Caco-2 (cell line): ENCODE measurements at regions of chr19 and their contacts with region 1.

Region 1: GRCh38 chr19:44653977-44654774 is 10.5 kb downstream of the PVR start:
- DNase-seq: peak in 1 of 2 experiments; percentile 54
- H3K4me3 ChIP-seq: no peak overlapping the region
- H3K4me3 Mint-ChIP-seq: no peak overlapping the region
- H3K27ac Mint-ChIP-seq: peak overlapping the region; percentile 31
- H3K4me1 ChIP-seq: no peaks in the 10 kb centered on the region
- H3K4me1 Mint-ChIP-seq: peaks cover 29% of the 10 kb centered on the region
- H3K27me3 ChIP-seq: no peaks in the 10 kb centered on the region
- H3K27me3 Mint-ChIP-seq: no peaks in the 10 kb centered on the region
- CTCF ChIP-seq: peak; percentile 20 to 58

Region 2: GRCh38 chr19:44512326-44513298 is 141.6 kb before region 1 on chr19:
- CTCF ChIA-PET with region 1: no interaction called
- POLR2A ChIA-PET with region 1: no interaction called
- intact Hi-C with region 1: loop called (anchors 5 kb)
- DNase-seq: peak; percentile 63 to 75
- H3K4me3 ChIP-seq: no peak overlapping the region
- H3K4me3 Mint-ChIP-seq: no peak overlapping the region
- H3K27ac Mint-ChIP-seq: no peak overlapping the region
- H3K4me1 ChIP-seq: no peaks in the 10 kb centered on the region
- H3K4me1 Mint-ChIP-seq: no peaks in the 10 kb centered on the region
- H3K27me3 ChIP-seq: no peaks in the 10 kb centered on the region
- H3K27me3 Mint-ChIP-seq: peaks cover 19% of the 10 kb centered on the region
- CTCF ChIP-seq: peak; percentile 68 to 73

Region 3: DNA sequence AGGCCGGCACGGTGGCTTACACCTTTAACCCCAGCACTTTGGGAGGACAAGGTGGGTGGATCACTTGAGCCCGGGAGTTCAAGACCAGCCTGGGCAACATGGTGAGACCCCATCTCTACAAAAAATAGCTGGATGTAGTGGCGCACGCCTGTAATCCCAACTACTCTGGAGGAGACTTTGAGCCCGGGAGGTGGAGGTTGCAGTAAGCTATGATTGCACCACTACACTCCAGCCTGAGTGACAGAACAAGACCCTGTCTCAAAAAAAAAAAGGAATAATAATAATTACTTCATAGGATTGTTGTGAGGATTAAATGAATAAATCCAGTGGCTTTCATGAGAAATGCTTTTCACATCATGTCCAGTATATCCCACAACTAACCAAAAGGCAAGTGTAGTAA is 32.8 kb before region 1 on chr19:
- CTCF ChIA-PET with region 1: no interaction called
- POLR2A ChIA-PET with region 1: no interaction called
- intact Hi-C with region 1: no loop called
- DNase-seq: no peak
- H3K4me3 ChIP-seq: no peak overlapping the region
- H3K4me3 Mint-ChIP-seq: no peak overlapping the region
- H3K27ac Mint-ChIP-seq: no peak overlapping the region
- H3K4me1 ChIP-seq: peaks cover 13% of the 10 kb centered on the region
- H3K4me1 Mint-ChIP-seq: peaks cover 9% of the 10 kb centered on the region
- H3K27me3 ChIP-seq: no peaks in the 10 kb centered on the region
- H3K27me3 Mint-ChIP-seq: no peaks in the 10 kb centered on the region
- CTCF ChIP-seq: no peak